MCF 10A (cell line): ENCODE measurements at regions of chr3 and their contacts with region 1.

Region 1: GRCh38 chr3:142828703-142829305 is 60.1 kb downstream of the PCOLCE2 start:
- DNase-seq: peak; percentile 82
- H3K4me3 Mint-ChIP-seq: no peak overlapping the region
- H3K27ac Mint-ChIP-seq: no peak overlapping the region
- H3K4me1 Mint-ChIP-seq: no peaks in the 10 kb centered on the region
- H3K27me3 Mint-ChIP-seq: no peaks in the 10 kb centered on the region
- CTCF ChIP-seq: peak; percentile 84

Region 2: DNA sequence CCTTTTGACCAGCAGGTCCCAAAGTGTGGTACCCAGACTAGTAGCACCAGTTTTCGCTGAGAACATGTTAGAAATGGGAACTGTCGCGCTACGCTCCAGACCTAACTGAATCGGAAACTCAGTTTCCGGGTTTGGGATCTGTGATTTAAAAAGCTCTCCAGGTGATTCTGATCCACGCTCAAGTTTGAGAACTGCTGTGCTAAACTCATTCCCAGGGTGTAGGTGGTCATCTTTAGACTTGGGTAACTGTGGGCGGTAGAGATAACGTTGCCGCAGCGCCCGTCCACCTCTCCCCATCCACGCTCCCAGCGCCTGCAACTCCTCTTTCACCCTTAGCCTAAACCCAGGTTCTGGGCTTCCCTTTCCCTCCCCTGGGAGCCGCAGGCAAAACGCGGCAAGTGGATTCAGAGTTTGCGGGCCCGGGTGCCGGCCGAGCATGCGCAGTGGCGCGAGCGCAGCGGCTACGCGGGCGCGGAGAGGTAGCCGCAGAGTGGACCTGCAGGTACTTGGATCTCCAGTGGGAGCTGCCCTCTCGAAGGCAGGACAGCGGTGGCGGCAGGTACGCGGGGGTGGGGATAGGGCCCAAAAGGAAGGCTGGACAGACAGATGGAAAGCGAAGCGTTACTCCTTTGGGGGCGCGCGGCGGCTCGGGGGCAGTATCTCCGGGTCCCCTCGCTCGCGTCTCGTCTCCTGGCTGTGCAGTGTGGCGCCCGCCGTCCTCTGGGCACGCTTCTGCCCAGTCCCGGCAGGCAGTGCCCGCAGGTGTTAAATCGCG is 232.7 kb before region 1 on chr3 and contains the start of gene PLS1:
- CTCF ChIA-PET with region 1: interaction called, 92 read pairs
- POLR2A ChIA-PET with region 1: no interaction called
- intact Hi-C with region 1: no loop called
- DNase-seq: peak; percentile 92
- H3K4me3 Mint-ChIP-seq: peak within 1 kb of the TSS; percentile 96
- H3K27ac Mint-ChIP-seq: peak within 1 kb of the TSS; percentile 94
- H3K4me1 Mint-ChIP-seq: peaks cover 12% of the 10 kb centered on the region
- H3K27me3 Mint-ChIP-seq: no peaks in the 10 kb centered on the region
- CTCF ChIP-seq: no peak
- total RNA-seq, gene PLS1: 7.3 and 9.3 TPM in 2 replicates

Region 3: DNA sequence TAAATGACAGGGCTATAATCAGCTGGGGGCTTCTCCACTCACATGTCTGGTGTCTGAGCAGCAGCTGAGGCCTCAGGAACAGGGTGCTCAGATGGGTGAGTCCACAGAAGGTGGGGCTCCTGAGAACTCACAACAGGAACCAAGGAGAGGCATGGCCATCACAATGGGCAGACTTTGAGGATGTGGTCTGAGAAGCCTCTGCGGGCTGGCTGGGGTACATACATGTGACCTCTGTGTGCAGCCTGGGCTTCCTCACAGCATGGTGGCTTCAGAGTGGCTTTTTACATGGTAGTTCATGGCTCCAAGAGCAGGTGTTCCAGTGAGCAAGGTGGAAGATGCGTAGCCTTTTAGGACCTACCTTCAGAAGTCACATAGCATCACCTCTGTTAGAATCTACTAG is 46.2 kb before region 1 on chr3:
- CTCF ChIA-PET with region 1: no interaction called
- POLR2A ChIA-PET with region 1: no interaction called
- intact Hi-C with region 1: no loop called
- DNase-seq: no peak
- H3K4me3 Mint-ChIP-seq: no peak overlapping the region
- H3K27ac Mint-ChIP-seq: no peak overlapping the region
- H3K4me1 Mint-ChIP-seq: no peaks in the 10 kb centered on the region
- H3K27me3 Mint-ChIP-seq: no peaks in the 10 kb centered on the region
- CTCF ChIP-seq: no peak

Region 4: DNA sequence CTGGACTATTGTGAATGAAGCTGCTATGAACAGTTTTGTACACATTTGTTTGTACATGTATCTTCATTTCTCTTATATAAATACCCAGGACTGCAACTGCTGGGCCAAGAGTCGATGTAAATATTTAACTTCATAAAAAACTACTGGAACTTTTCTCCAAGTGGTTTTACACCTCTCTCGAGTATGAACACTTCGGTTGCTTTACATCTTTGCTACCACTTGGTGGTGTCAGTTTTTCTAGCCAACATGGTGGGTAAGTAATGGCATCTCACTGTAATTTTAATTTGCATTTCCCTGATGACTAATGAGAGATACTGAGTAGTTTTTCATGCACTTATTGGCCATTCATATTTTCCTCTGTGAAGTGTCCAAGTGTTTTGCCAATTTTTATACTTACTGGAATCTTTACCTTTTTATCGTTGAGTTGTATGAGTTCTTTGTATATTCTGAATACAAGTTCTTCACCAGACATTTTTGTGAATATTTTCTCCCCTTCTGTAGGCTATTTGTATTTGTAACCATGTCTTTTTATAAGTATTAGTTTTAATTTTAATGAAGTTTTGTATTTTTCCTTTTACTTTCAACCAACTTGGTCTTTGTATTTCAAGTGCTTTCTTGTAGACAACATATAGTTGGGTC is 15.7 kb after region 1 on chr3:
- CTCF ChIA-PET with region 1: interaction called, 65 read pairs
- POLR2A ChIA-PET with region 1: interaction called, 5 read pairs
- intact Hi-C with region 1: no loop called
- DNase-seq: peak; percentile 72
- H3K4me3 Mint-ChIP-seq: no peak overlapping the region
- H3K27ac Mint-ChIP-seq: no peak overlapping the region
- H3K4me1 Mint-ChIP-seq: no peaks in the 10 kb centered on the region
- H3K27me3 Mint-ChIP-seq: no peaks in the 10 kb centered on the region
- CTCF ChIP-seq: peak; percentile 44

Region 5: GRCh38 chr3:142892721-142893120 is 63.9 kb after region 1 on chr3:
- CTCF ChIA-PET with region 1: interaction called, 15 read pairs
- POLR2A ChIA-PET with region 1: no interaction called
- intact Hi-C with region 1: no loop called
- DNase-seq: no peak
- H3K4me3 Mint-ChIP-seq: no peak overlapping the region
- H3K27ac Mint-ChIP-seq: no peak overlapping the region
- H3K4me1 Mint-ChIP-seq: peaks cover 6% of the 10 kb centered on the region
- H3K27me3 Mint-ChIP-seq: no peaks in the 10 kb centered on the region
- CTCF ChIP-seq: no peak

Region 6: DNA sequence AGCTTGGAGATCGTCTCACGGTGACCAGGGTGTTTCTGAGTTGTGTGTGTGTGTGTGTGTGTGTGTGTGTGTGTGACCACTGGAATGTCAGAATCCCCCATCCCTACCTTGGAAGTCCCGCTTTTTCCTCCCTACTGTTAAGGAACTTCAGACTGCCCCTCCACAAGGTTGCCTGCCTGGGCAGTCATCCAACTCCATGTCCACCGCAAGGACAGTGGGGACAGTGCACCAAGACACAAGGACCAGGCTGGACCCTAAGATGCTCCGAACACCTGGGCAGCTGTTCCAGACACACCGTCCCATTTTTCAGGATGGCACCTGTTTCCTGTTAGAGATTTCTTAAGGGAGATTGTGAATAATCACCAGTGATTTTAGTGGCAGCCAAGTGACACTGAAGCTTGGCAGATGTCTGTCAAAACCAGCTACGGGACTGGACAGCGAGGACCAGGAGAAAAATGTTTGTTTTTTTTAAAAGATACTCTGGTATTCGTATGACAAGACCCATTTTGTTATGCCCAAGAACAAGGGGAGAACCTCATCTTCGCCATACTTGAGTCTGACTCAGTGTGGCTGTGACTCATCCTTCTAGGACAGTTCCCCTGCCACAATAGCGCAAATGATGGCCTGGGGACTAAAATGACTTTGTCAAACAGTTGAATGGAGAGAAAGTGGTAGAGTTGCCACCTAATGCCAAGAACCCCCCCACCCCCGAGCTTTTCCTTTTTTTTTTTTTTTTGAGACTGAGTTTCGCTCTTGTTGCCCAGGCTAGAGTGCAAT is 119.2 kb after region 1 on chr3:
- CTCF ChIA-PET with region 1: interaction called, 16 read pairs
- POLR2A ChIA-PET with region 1: no interaction called
- intact Hi-C with region 1: no loop called
- DNase-seq: peak; percentile 50
- H3K4me3 Mint-ChIP-seq: no peak overlapping the region
- H3K27ac Mint-ChIP-seq: no peak overlapping the region
- H3K4me1 Mint-ChIP-seq: peaks cover 6% of the 10 kb centered on the region
- H3K27me3 Mint-ChIP-seq: peaks cover 14% of the 10 kb centered on the region
- CTCF ChIP-seq: no peak

Region 7: GRCh38 chr3:142987080-142987700 is 158.4 kb after region 1 on chr3:
- CTCF ChIA-PET with region 1: interaction called, 212 read pairs
- POLR2A ChIA-PET with region 1: interaction called, 9 read pairs
- intact Hi-C with region 1: loop called (anchors 1 kb)
- DNase-seq: peak; percentile 54
- H3K4me3 Mint-ChIP-seq: no peak overlapping the region
- H3K27ac Mint-ChIP-seq: no peak overlapping the region
- H3K4me1 Mint-ChIP-seq: no peaks in the 10 kb centered on the region
- H3K27me3 Mint-ChIP-seq: peaks cover 11% of the 10 kb centered on the region
- CTCF ChIP-seq: peak; percentile 54